Stomach (tissue), 19 donors: ENCODE measurements at regions of chr1 and their contacts with region 1.

Region 1: DNA sequence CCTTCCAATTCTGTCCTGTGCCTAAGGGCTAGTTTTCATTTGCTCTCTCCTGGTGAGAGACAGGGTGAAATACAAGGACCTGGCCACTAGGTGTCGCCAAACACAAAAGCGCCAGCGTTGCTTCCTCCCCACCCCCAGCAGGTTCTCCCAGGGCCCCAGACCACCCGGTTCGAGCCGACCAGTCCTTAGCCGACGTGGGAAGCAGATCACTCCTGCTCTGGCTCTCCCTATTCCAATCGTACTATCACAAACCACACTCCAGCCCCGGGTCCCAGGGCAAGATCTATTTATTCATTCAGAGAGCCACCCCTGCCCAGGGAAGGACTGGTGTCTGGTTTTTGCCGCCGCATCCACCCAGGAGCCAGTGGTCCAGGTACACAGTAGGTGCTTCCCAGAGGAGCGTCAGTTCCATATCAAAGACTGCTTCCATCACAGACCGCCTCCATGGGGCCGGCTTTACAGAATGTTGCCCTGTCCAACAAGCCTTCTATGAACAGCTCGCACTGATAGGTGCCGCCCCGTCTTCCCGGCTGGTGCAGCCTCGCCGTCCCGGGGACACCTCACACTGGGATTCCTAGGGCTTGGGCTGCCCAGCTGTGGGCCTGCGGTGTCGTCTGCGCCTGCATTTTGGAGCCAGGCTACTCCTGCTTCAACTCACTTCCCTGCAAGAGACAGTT is 35.0 kb downstream of the CTNNBIP1 start:
- DNase-seq: peak; percentile 70 to 93
- H3K4me3 ChIP-seq: peak overlapping the region; percentile 5 to 23 (median 16)
- H3K27ac ChIP-seq: peak overlapping the region in 2 of 5 donors; percentile 47 to 54
- H3K4me1 ChIP-seq: peaks cover 0 to 30% (median 22%) of the 10 kb centered on the region in 4 donors
- H3K27me3 ChIP-seq: no peaks in the 10 kb centered on the region
- CTCF ChIP-seq: peak in 5 of 7 experiments; percentile 85 to 97 (median 93)
- EP300 ChIP-seq: no peak
- POLR2A ChIP-seq: no peak

Region 2: GRCh38 chr1:9922342-9922741 is 47.2 kb after region 1 on chr1:
- intact Hi-C with region 1: no loop called
- DNase-seq: no peak
- H3K4me3 ChIP-seq: no peak overlapping the region
- H3K27ac ChIP-seq: no peak overlapping the region
- H3K4me1 ChIP-seq: no peaks in the 10 kb centered on the region
- H3K27me3 ChIP-seq: no peaks in the 10 kb centered on the region
- CTCF ChIP-seq: no peak
- EP300 ChIP-seq: no peak
- POLR2A ChIP-seq: no peak

Region 3: GRCh38 chr1:9942939-9943788 is 68.1 kb after region 1 on chr1 and contains the starts of genes LZIC and NMNAT1:
- intact Hi-C with region 1: loop called (anchors 5 kb)
- DNase-seq: peak; percentile 95 to 97
- H3K4me3 ChIP-seq: peak within 1 kb of the TSS; percentile 59 to 89 (median 80)
- H3K27ac ChIP-seq: peak within 1 kb of the TSS; percentile 85 to 92 (median 91)
- H3K4me1 ChIP-seq: peaks cover 14 to 39% (median 26%) of the 10 kb centered on the region in 4 donors
- H3K27me3 ChIP-seq: no peaks in the 10 kb centered on the region
- CTCF ChIP-seq: peak in 1 of 7 experiments; percentile 36
- EP300 ChIP-seq: no peak
- POLR2A ChIP-seq: peak in 1 of 4 donors; percentile 71
- total RNA-seq, gene LZIC: 1.8 to 32.5 (median 10.7) TPM
- total RNA-seq, gene NMNAT1: 8.5 to 18.8 (median 10.6) TPM

Region 4: DNA sequence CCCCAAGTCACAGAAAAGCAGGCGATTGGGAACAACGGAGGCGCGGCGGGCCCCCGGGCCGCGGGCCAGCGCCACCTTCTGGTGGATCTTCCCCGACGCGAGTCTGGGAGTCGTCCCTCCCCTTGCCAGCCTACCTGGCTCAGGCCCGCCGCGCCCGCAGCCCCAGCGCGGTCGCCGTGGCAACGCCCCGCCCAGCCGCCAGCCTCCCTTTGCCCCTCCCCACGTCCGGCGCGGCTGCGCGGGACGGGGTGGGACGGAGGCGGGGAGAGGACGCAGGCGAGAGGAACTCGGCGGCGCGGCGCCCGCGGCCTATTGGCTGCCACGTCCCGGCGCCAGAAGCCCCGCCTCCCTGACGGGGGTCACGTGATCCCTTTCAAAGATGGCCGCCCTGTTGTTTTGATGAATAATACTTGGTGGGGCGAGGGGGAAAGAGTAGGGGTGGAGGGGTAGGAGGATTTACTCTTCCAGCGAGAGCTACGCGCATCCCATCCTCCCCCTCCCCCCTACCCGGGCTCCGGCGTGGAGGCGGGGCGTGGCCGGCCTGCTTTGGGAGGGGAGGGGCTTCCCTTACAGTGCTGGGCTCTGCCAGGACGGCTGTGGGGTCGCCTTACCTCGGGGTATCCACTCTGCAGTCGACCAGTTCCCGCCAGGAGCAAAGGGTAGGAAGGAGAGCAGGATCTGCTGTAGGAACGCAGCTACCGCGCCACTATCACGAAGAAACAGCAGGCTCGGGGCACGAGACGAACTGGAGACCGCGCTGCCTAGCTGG is 157.7 kb after region 1 on chr1 and contains the start of gene UBE4B:
- intact Hi-C with region 1: loop called (anchors 10 kb)
- DNase-seq: peak; percentile 99 to 100
- H3K4me3 ChIP-seq: peak within 1 kb of the TSS; percentile 84 to 94 (median 86)
- H3K27ac ChIP-seq: peak within 1 kb of the TSS; percentile 91 to 97 (median 94)
- H3K4me1 ChIP-seq: peaks cover 12 to 53% (median 30%) of the 10 kb centered on the region in 4 donors
- H3K27me3 ChIP-seq: no peaks in the 10 kb centered on the region
- CTCF ChIP-seq: peak in 5 of 7 experiments; percentile 63 to 90 (median 77)
- EP300 ChIP-seq: no peak
- POLR2A ChIP-seq: no peak
- total RNA-seq, gene UBE4B: 37.1 to 82.9 (median 42.6) TPM